CD14-positive monocyte (primary cell): ENCODE measurements at regions of chr16 and their contacts with region 1.

Region 1: GRCh38 chr16:30922960-30923535 is 324 bp upstream of the FBXL19 start:
- DNase-seq: peak; percentile 97 to 99 (median 98)
- H3K4me3 ChIP-seq: peak overlapping the region; percentile 60 to 85 (median 74)
- H3K4me3 Mint-ChIP-seq: peak overlapping the region; percentile 94 to 100
- H3K27ac ChIP-seq: peak overlapping the region; percentile 93 to 94
- H3K27ac Mint-ChIP-seq: peak overlapping the region; percentile 100
- H3K4me1 ChIP-seq: peaks cover 12 to 25% of the 10 kb centered on the region in 2 donors
- H3K4me1 Mint-ChIP-seq: peaks cover 29% of the 10 kb centered on the region
- H3K27me3 ChIP-seq: no peaks in the 10 kb centered on the region
- H3K27me3 Mint-ChIP-seq: no peaks in the 10 kb centered on the region
- CTCF ChIP-seq: no peak

Region 2: GRCh38 chr16:30491744-30492308 is 431.2 kb before region 1 on chr16:
- intact Hi-C with region 1: no loop called
- DNase-seq: no peak
- H3K4me3 ChIP-seq: no peak overlapping the region
- H3K4me3 Mint-ChIP-seq: no peak overlapping the region
- H3K27ac ChIP-seq: peak overlapping the region in 1 of 2 donors; percentile 50
- H3K27ac Mint-ChIP-seq: peak overlapping the region; percentile 24 to 79 (median 44)
- H3K4me1 ChIP-seq: no peaks in the 10 kb centered on the region
- H3K4me1 Mint-ChIP-seq: peaks cover 11% of the 10 kb centered on the region
- H3K27me3 ChIP-seq: no peaks in the 10 kb centered on the region
- H3K27me3 Mint-ChIP-seq: peaks cover 0 to 2% (median 0%) of the 10 kb centered on the region in 3 donors
- CTCF ChIP-seq: no peak

Region 3: DNA sequence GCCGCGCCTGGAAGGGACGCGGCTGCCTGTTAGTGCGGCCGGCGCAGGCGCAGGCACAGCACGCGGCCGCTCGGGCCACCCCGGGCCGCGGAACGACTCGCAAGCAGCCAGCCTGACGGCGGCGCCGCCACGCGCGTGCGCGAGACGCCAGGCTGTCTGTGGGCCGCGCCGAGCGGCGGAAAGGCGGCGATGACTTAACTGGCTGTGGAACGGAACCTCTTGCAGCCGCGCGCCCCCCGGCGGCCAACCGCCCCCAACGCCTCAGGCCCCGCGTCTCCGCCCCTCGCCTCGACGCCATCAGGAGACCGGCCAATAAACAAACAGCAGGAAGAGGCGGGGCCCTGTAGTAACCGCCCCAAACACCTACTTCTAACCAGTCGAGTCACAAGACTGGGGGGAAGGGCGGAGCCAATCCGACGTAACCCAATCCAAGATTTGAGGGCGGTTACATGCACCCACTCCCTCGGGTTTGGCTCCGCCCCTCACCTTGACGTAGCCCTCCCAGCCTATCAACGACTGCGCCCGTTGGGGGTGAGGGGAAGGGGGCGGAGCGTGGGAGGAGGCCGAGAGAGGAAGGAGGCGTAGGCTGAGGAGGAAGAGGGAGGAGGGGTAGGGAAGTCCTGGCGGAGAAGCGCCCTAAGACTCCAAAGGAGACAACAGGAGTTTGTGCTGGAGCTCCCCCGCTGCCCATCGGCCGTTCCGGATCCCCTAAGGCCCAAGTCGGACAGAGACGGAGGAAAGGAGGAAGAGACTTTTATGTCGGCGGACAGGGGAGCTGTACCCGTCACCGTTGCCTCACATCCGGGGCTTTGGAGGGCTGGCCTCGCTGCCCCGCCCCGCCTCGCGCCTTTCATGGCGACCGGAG is 264.9 kb before region 1 on chr16 and contains the start of gene FBRS:
- intact Hi-C with region 1: loop called in 1 of 2 experiments (anchors 10 kb)
- DNase-seq: peak; percentile 100
- H3K4me3 ChIP-seq: peak within 1 kb of the TSS; percentile 81 to 99 (median 86)
- H3K4me3 Mint-ChIP-seq: peak within 1 kb of the TSS; percentile 90 to 99
- H3K27ac ChIP-seq: peak within 1 kb of the TSS; percentile 93 to 99
- H3K27ac Mint-ChIP-seq: peak within 1 kb of the TSS; percentile 100
- H3K4me1 ChIP-seq: peaks cover 33 to 45% of the 10 kb centered on the region in 2 donors
- H3K4me1 Mint-ChIP-seq: peaks cover 38% of the 10 kb centered on the region
- H3K27me3 ChIP-seq: no peaks in the 10 kb centered on the region
- H3K27me3 Mint-ChIP-seq: peaks cover 0 to 1% (median 0%) of the 10 kb centered on the region in 3 donors
- CTCF ChIP-seq: peak; percentile 68
- polyA plus RNA-seq, gene FBRS: 1.4 to 44.8 (median 2.1) TPM

Region 4: DNA sequence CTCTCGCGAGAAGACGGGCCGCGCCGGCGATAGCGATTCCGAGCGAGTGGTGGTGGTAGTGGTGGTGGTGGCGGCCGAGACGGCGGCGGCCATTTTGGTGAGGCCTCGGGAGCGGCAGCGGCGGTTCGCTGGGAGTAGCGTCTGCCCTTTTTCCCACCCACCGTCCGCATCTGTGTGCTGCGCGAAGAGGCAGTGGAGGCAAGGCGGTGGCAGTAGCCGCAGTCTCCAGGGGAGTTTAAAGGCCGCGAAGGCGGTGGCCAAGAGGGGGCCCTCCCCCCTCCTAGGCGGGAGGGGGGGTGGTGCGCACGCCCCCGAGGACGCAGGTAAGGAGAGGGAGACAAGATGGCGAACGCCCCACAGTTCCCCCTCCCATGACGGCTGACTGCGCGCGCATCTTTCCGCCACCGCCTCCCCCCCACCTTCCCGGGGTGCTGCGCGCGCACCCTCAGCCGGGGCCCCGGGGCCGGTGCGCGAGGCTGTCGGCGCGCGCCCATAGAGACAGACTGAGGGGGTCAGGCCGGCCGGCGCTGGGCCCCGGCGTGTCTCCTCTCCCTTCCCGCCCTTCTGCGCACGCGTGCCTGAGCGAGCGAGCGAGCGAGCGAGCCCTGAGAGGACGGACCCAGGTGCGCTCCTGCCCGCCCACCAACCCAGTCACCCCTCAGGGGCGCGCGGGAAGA is 224.8 kb before region 1 on chr16:
- intact Hi-C with region 1: loop called in 1 of 2 experiments (anchors 5 kb)
- DNase-seq: peak; percentile 95 to 98 (median 97)
- H3K4me3 ChIP-seq: peak overlapping the region; percentile 91 to 98 (median 94)
- H3K4me3 Mint-ChIP-seq: peak overlapping the region; percentile 92 to 99
- H3K27ac ChIP-seq: peak overlapping the region; percentile 96 to 97
- H3K27ac Mint-ChIP-seq: peak overlapping the region; percentile 99 to 100 (median 100)
- H3K4me1 ChIP-seq: peaks cover 25 to 42% of the 10 kb centered on the region in 2 donors
- H3K4me1 Mint-ChIP-seq: peaks cover 40% of the 10 kb centered on the region
- H3K27me3 ChIP-seq: no peaks in the 10 kb centered on the region
- H3K27me3 Mint-ChIP-seq: peaks cover 0 to 1% (median 0%) of the 10 kb centered on the region in 3 donors
- CTCF ChIP-seq: no peak

Region 5: GRCh38 chr16:30844671-30845449 is 78.2 kb before region 1 on chr16:
- intact Hi-C with region 1: loop called (anchors 1 to 2 kb)
- DNase-seq: peak; percentile 78 to 88 (median 81)
- H3K4me3 ChIP-seq: peak overlapping the region; percentile 20 to 67 (median 26)
- H3K4me3 Mint-ChIP-seq: peak overlapping the region; percentile 70 to 88
- H3K27ac ChIP-seq: peak overlapping the region in 1 of 2 donors; percentile 50
- H3K27ac Mint-ChIP-seq: peak overlapping the region in 6 of 7 donors; percentile 60 to 89 (median 78)
- H3K4me1 ChIP-seq: peaks cover 7 to 9% of the 10 kb centered on the region in 2 donors
- H3K4me1 Mint-ChIP-seq: peaks cover 10% of the 10 kb centered on the region
- H3K27me3 ChIP-seq: no peaks in the 10 kb centered on the region
- H3K27me3 Mint-ChIP-seq: peaks cover 0 to 2% (median 0%) of the 10 kb centered on the region in 3 donors
- CTCF ChIP-seq: peak; percentile 85

Region 6: DNA sequence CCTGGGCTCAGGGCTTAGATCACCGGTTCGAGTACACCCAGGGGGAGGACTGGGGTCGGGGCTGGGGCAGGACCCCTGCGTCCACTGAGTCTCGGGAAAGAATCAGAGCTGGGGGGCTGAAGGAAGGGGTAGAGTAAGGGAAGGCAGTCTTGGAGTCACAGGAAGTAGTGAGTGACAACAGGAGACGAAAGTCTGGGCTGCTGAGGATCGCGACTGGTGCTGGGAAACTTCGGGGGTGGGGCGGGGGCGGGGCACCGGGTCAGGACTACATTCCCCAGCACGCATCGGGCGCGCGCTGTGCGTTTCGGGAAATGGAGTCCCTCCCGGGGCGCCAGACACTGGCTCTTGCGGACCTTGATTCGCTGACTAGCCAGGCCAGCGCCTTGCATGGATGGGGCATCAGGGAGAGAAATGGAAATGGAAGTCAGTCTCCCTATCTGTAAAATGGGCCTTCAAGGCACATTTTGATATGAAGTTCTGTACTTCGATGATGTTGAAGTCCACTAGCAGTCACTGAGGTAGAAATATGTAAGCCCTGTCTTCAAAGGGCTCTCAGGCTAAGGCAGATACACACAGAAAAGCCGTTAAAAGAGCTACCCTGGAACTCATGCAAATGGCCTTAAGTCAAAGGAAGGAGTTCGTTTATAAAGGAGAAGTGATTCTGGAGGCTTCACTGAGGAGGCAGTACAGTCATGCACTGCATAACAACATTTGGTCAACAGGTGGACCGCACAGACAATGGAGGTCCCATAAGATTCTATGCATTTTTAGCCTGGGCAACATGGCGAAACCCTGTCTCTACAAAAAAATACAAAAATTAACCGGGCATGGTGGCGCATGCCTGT is 25.9 kb before region 1 on chr16:
- intact Hi-C with region 1: loop called (anchors 2 kb)
- DNase-seq: peak; percentile 79 to 86 (median 82)
- H3K4me3 ChIP-seq: peak overlapping the region; percentile 37 to 88 (median 50)
- H3K4me3 Mint-ChIP-seq: peak overlapping the region; percentile 85 to 92
- H3K27ac ChIP-seq: peak overlapping the region; percentile 58 to 77
- H3K27ac Mint-ChIP-seq: peak overlapping the region; percentile 80 to 96 (median 90)
- H3K4me1 ChIP-seq: peaks cover 47 to 60% of the 10 kb centered on the region in 2 donors
- H3K4me1 Mint-ChIP-seq: peaks cover 56% of the 10 kb centered on the region
- H3K27me3 ChIP-seq: no peaks in the 10 kb centered on the region
- H3K27me3 Mint-ChIP-seq: peaks cover 0 to 5% (median 0%) of the 10 kb centered on the region in 3 donors
- CTCF ChIP-seq: no peak

Region 7: GRCh38 chr16:30957456-30958174 is 34.6 kb after region 1 on chr16 and contains the start of gene SETD1A:
- intact Hi-C with region 1: loop called in 1 of 2 experiments (anchors 2 kb)
- DNase-seq: peak; percentile 93 to 97 (median 96)
- H3K4me3 ChIP-seq: peak within 1 kb of the TSS; percentile 66 to 95 (median 71)
- H3K4me3 Mint-ChIP-seq: peak within 1 kb of the TSS; percentile 90 to 95
- H3K27ac ChIP-seq: peak within 1 kb of the TSS; percentile 88 to 97
- H3K27ac Mint-ChIP-seq: peak within 1 kb of the TSS; percentile 96 to 99 (median 99)
- H3K4me1 ChIP-seq: peaks cover 13 to 21% of the 10 kb centered on the region in 2 donors
- H3K4me1 Mint-ChIP-seq: peaks cover 17% of the 10 kb centered on the region
- H3K27me3 ChIP-seq: no peaks in the 10 kb centered on the region
- H3K27me3 Mint-ChIP-seq: peaks cover 0 to 1% (median 0%) of the 10 kb centered on the region in 3 donors
- CTCF ChIP-seq: no peak
- polyA plus RNA-seq, gene SETD1A: 0.16 to 6.6 (median 1.3) TPM

Region 8: DNA sequence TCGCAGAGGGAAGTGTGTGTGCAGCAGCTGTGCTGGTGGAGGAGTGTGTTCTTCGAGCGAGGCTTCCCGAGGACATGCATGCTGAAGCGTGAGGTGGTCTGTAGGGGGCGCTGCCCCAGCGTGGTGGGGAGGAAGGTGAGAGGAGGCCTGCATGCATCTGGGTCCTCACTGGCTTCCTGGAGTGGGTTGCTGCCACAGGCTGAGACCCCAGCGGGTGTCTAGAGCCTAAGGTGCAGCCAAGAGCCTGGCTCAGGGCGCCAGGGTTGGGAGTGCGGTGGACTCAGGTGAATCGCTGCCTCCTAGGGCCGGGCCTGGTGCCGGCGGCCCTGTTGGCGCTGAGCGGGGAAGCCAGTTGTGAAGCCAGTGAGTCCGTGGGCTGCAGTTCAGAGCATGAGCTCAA is 54.5 kb after region 1 on chr16:
- intact Hi-C with region 1: no loop called
- DNase-seq: no peak
- H3K4me3 ChIP-seq: no peak overlapping the region
- H3K4me3 Mint-ChIP-seq: no peak overlapping the region
- H3K27ac ChIP-seq: no peak overlapping the region
- H3K27ac Mint-ChIP-seq: peak overlapping the region in 3 of 7 donors; percentile 22 to 43 (median 41)
- H3K4me1 ChIP-seq: no peaks in the 10 kb centered on the region
- H3K4me1 Mint-ChIP-seq: no peaks in the 10 kb centered on the region
- H3K27me3 ChIP-seq: no peaks in the 10 kb centered on the region
- H3K27me3 Mint-ChIP-seq: no peaks in the 10 kb centered on the region
- CTCF ChIP-seq: peak; percentile 34